Left colon (tissue), 2 donors: ENCODE measurements at regions of chr19 and their contacts with region 1.

Region 1: DNA sequence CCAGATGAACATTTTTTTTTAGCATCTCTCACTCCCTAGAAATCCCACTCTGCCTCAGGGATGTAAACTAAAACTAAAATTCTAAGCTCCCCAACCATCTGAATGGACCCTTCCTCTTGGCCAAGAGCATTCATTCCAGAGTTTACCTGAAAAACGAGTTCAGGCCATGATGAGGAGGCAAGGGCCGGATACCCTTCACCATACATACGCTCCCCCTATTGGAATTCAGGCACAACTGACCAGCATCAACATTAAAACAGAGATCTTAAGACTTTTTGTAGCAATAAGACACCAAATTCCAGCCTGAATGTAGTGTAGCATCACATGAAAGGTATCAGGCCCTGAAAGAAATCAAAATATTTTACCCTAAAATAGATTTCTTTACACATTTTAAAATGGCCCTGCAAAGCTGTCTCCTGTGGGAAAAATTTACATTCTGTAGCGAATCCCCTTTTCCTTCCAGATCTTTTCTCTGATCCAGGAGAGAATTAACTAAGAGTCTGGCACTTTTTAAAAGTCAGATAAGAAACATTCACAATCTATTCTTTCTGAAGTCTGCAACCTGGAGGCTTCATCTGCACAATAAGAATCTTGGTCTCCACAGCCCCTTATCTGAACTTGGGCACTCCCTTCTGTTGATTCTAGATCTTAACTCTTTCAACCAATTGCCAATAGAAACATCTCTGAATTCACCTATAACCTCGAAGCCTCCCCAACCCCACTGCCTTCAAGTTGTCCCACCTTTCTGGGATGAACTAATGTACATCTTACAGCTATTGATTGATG is 888.5 kb downstream of the UQCRFS1 start:
- DNase-seq: no peak
- ATAC-seq: no peak

Region 2: DNA sequence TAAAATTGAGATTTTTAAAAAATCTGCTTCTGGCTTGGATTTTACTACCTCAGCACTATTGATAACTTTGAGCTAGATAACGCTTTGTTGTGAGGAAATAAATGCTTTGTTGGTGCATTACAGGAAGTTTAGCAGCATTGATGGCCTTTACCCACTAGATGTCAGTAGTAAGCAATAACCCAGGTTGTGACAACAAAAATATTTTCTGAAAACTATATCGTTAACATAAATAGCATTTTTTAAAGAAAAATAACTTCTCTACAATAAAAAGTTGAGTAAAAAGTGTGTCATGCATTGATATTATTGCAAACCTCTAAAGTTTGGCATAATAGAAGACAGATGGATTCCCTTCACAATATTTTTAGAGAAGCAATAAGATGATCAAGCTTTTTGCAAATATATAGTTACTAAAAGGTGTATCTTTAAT is 358.1 kb before region 1 on chr19:
- intact Hi-C with region 1: loop called (anchors 5 to 10 kb)
- DNase-seq: no peak
- ATAC-seq: no peak

Region 3: GRCh38 chr19:27974082-27974513 is 350.4 kb before region 1 on chr19:
- intact Hi-C with region 1: loop called (anchors 5 to 10 kb)
- DNase-seq: peak; percentile 33 to 36
- ATAC-seq: peak; percentile 87